ENCODE measurements at regions of chr20 and their contacts with region 1.

Region 1: GRCh38 chr20:21505161-21505809 is 8.6 kb downstream of the NKX2-2 start:
- DNase-seq: peak in 1 of 2 experiments; percentile 100
- H3K4me3 ChIP-seq: peak overlapping the region; percentile 28 to 69 (median 48)
- H3K27ac ChIP-seq: no peak overlapping the region
- H3K4me1 ChIP-seq: peaks cover 6 to 33% (median 10%) of the 10 kb centered on the region in 4 experiments; a peak in 6 of 7 replicates
- H3K27me3 ChIP-seq: peaks cover 47 to 68% (median 59%) of the 10 kb centered on the region in 4 experiments
- CTCF ChIP-seq: peak; percentile 88 to 96 (median 95)
- EP300 ChIP-seq: no peak
- POLR2A ChIP-seq: no peak
- RAD21 ChIP-seq: peak; percentile 100

Region 2: DNA sequence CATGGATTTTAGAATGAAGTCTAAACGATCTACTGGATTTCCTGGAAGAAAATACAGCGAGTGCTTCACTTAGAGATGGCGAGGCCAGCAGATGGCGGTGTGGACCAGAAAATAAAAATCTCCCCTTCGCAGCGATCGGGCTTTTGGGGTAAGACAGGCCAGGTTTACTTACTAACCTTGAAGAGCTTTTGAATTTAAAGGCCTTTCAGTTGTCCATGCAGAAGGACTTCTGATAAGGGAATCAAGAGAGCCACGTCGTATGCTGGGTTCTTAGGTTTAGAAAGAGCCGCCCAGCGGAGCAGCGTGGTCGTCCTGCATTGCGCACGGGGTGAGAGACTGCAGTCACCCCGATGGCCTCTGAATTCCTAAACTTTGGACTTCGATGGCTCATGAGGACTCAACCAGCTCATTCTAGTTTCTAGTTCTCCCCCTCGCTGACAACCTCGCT is 667.7 kb before region 1 on chr20:
- CTCF ChIA-PET with region 1: interaction called, 56 read pairs
- POLR2A ChIA-PET with region 1: no interaction called
- DNase-seq: peak in 1 of 2 experiments; percentile 78
- H3K4me3 ChIP-seq: no peak overlapping the region
- H3K27ac ChIP-seq: no peak overlapping the region
- H3K4me1 ChIP-seq: no peaks in the 10 kb centered on the region
- H3K27me3 ChIP-seq: no peaks in the 10 kb centered on the region; a peak in 1 of 7 replicates
- CTCF ChIP-seq: peak; percentile 53 to 77 (median 72)
- EP300 ChIP-seq: no peak
- POLR2A ChIP-seq: no peak
- RAD21 ChIP-seq: peak; percentile 83 to 85

Region 3: DNA sequence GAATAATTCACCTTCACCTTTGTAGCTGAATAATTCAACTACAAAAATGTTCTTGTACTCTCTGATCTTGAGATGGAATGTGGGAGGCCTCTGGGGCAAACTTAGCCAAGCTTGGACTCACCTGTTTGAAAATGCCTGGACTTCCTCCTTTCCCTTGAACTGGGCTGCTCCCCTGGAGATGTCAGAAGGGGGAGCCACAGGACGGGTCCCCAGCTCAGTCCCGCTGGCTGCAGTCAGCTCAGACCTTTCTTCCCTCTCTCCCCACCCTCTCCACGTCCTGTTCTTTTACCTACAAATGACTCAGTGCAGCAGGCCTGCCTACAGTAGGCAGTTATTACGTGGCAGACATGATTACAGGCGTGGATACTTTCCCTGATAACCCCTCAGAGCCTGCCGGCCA is 661.3 kb before region 1 on chr20:
- CTCF ChIA-PET with region 1: interaction called, 56 read pairs
- POLR2A ChIA-PET with region 1: no interaction called
- DNase-seq: no peak
- H3K4me3 ChIP-seq: no peak overlapping the region
- H3K27ac ChIP-seq: no peak overlapping the region
- H3K4me1 ChIP-seq: no peaks in the 10 kb centered on the region
- H3K27me3 ChIP-seq: peaks cover 0 to 2% (median 0%) of the 10 kb centered on the region in 4 experiments; a peak in 1 of 7 replicates
- CTCF ChIP-seq: peak; percentile 53 to 66 (median 55)
- EP300 ChIP-seq: no peak
- POLR2A ChIP-seq: no peak
- RAD21 ChIP-seq: peak; percentile 77 to 78

Region 4: GRCh38 chr20:21391185-21391971 is 113.9 kb before region 1 on chr20:
- CTCF ChIA-PET with region 1: interaction called, 12 read pairs
- POLR2A ChIA-PET with region 1: interaction called, 4 read pairs
- DNase-seq: peak in 1 of 2 experiments; percentile 70
- H3K4me3 ChIP-seq: peak overlapping the region; percentile 19 to 60 (median 28)
- H3K27ac ChIP-seq: no peak overlapping the region
- H3K4me1 ChIP-seq: no peaks in the 10 kb centered on the region
- H3K27me3 ChIP-seq: peaks cover 31 to 55% (median 45%) of the 10 kb centered on the region in 4 experiments
- CTCF ChIP-seq: no peak
- EP300 ChIP-seq: no peak
- POLR2A ChIP-seq: no peak
- RAD21 ChIP-seq: no peak

Region 5: DNA sequence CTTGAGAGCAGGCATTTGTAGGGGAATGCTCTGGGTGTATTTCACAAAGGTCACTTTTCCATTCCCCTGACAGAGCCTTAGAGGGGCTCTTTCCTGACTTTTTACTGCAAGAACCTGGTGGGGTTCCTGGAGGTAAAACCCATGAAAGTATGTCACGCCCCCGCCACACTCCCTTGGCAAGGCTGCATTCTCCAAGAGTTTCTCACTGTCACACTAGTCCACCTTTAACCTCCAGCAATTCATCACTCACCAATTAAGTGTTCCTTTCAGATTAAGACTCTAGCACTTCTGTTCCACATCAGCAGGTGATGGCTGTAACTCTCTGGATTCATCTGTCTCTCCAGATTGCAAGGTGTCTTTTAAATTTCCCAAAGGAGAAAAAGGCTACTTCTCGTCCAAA is 75.3 kb before region 1 on chr20:
- CTCF ChIA-PET with region 1: no interaction called
- POLR2A ChIA-PET with region 1: no interaction called
- DNase-seq: no peak
- H3K4me3 ChIP-seq: no peak overlapping the region
- H3K27ac ChIP-seq: no peak overlapping the region
- H3K4me1 ChIP-seq: no peaks in the 10 kb centered on the region
- H3K27me3 ChIP-seq: no peaks in the 10 kb centered on the region
- CTCF ChIP-seq: no peak
- EP300 ChIP-seq: no peak
- POLR2A ChIP-seq: no peak
- RAD21 ChIP-seq: no peak

Region 6: DNA sequence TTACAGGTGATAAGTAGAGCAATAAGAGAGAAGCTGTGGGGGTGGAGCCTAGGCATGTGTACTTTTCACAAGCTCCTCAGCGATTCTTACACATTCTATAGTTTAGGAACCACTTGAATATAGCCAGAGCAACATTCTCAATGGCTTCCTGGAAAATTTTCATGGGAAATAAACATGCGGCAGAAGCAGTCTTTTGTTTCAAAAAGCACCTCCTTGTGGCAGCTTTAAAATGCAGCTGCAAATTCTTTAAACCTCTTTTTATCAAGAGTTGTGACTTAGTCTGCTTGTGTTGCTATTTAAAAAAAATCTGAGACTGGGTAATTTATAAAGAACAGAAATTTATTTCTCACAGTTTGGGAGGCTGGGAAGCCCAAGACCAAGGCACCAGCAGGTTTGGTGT is 15.2 kb before region 1 on chr20:
- CTCF ChIA-PET with region 1: interaction called, 21 read pairs
- POLR2A ChIA-PET with region 1: no interaction called
- DNase-seq: no peak
- H3K4me3 ChIP-seq: no peak overlapping the region
- H3K27ac ChIP-seq: no peak overlapping the region
- H3K4me1 ChIP-seq: peaks cover 0 to 4% (median 0%) of the 10 kb centered on the region in 4 experiments; a peak in 1 of 7 replicates
- H3K27me3 ChIP-seq: no peaks in the 10 kb centered on the region
- CTCF ChIP-seq: peak in 1 of 3 experiments; percentile 30; a peak in 2 of 4 replicates
- EP300 ChIP-seq: no peak
- POLR2A ChIP-seq: no peak
- RAD21 ChIP-seq: peak; percentile 30 to 31; a peak in 1 of 4 replicates

Region 7: DNA sequence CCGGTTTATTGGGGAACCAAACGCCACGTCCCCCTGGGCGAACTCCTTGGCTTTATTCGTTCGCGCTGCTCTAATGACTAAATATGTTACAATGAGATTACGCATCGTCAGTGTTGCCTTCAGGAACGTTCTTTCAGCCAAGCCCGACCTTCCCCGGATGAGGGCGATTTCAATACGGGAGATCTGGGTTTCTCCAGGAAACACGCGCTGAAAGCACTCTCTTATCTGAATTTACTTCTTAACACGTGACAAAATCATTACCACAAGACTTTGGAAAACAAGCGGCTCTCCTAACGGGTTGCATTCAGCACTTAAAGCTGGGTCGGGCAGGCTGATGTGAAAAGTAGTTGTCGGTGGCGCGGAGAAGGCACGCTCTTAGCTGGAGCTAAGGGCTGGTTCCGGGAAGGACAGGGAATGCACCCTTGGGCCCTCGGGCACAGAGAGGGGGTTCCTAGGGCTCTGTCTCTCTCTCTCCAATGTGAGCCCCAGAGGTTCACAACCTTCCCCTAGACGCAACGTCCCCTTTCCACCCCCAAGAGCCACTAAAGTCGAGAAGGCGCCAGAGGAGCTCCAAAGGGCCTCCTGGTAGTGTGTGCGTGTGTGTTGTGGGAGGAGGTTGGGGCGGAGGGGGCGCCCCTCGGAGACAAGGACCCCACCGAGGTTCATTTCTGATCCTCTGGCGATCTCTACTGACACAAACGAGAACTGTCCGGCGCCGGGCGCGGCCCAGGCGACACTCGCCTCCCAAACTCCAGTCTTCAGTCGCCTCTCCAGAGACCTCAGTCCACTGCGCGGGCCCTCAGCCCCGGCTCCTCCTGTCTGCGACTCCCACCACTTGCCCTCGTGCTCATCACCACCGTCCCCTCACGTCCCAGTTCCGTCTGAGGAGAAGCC is 15.7 kb after region 1 on chr20:
- CTCF ChIA-PET with region 1: interaction called, 30 read pairs
- POLR2A ChIA-PET with region 1: interaction called, 12 read pairs
- DNase-seq: no peak
- H3K4me3 ChIP-seq: peak overlapping the region; percentile 32 to 59 (median 34); a peak in 7 of 8 replicates
- H3K27ac ChIP-seq: no peak overlapping the region
- H3K4me1 ChIP-seq: peaks cover 19 to 53% (median 31%) of the 10 kb centered on the region in 4 experiments
- H3K27me3 ChIP-seq: peaks cover 94 to 100% (median 100%) of the 10 kb centered on the region in 4 experiments
- CTCF ChIP-seq: peak; percentile 59 to 75 (median 72)
- EP300 ChIP-seq: no peak
- POLR2A ChIP-seq: no peak
- RAD21 ChIP-seq: peak; percentile 77 to 85

Region 8: DNA sequence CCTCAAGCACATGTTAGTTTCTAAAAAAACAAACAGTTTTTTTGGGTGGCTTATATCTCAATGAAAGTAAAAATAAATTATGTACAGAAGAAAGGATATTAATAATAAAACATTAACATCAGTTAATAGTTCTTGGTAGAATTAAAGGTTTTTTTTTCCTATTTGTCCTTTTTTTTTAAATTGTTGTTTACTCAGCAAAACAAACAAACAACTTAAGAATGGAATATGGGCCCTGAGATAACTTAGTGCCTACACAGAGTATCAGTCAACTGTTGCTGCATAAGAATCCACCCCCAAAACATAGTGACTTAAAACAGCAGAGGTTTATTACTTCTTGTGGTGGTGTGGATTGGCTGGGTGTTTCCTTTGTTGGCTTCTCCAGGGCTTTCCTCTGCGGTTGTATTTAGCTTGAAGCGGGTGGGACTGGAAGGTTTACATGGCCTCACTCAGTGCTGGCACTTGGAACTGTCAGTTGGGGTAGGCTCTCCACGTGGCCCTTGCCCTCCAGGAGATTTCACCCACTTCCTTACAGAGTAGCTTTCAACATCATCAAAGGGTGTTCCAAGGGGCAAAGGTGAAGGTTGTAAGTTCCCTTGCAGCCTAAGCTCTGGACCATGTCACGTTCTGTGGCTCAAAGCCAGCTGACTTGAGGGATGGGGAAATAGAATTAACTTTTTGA is 40.9 kb after region 1 on chr20:
- CTCF ChIA-PET with region 1: no interaction called
- POLR2A ChIA-PET with region 1: no interaction called
- DNase-seq: no peak
- H3K4me3 ChIP-seq: no peak overlapping the region
- H3K27ac ChIP-seq: no peak overlapping the region
- H3K4me1 ChIP-seq: no peaks in the 10 kb centered on the region
- H3K27me3 ChIP-seq: no peaks in the 10 kb centered on the region
- CTCF ChIP-seq: no peak
- EP300 ChIP-seq: no peak
- POLR2A ChIP-seq: no peak
- RAD21 ChIP-seq: no peak

Region 9: GRCh38 chr20:21607971-21608725 is 102.9 kb after region 1 on chr20:
- CTCF ChIA-PET with region 1: no interaction called
- POLR2A ChIA-PET with region 1: no interaction called
- DNase-seq: no peak
- H3K4me3 ChIP-seq: no peak overlapping the region
- H3K27ac ChIP-seq: no peak overlapping the region
- H3K4me1 ChIP-seq: no peaks in the 10 kb centered on the region
- H3K27me3 ChIP-seq: peaks cover 0 to 3% (median 0%) of the 10 kb centered on the region in 4 experiments; a peak in 2 of 7 replicates
- CTCF ChIP-seq: no peak
- EP300 ChIP-seq: no peak
- POLR2A ChIP-seq: no peak
- RAD21 ChIP-seq: no peak